Dendritic cell treated with granulocyte-macrophage colony-stimulating factor and Interleukin-4, amounts not matched to agents 40 ng/mL and 50 ng/mL, for 4 days (primary cell): ENCODE measurements at regions of chr19 and their contacts with region 1.

Region 1: GRCh38 chr19:44500148-44500956 is at the start of gene ZNF180:
- H3K4me3 Mint-ChIP-seq: peak within 1 kb of the TSS; percentile 82
- H3K27ac Mint-ChIP-seq: peak within 1 kb of the TSS; percentile 90
- H3K4me1 Mint-ChIP-seq: peaks cover 35% of the 10 kb centered on the region
- H3K27me3 Mint-ChIP-seq: peaks cover 21% of the 10 kb centered on the region

Region 2: GRCh38 chr19:44401139-44402115 is 98.9 kb before region 1 on chr19 and contains the start of gene ZNF285:
- intact Hi-C with region 1: loop called (anchors 10 kb)
- H3K4me3 Mint-ChIP-seq: peak within 1 kb of the TSS; percentile 79
- H3K27ac Mint-ChIP-seq: peak within 1 kb of the TSS; percentile 72
- H3K4me1 Mint-ChIP-seq: peaks cover 9% of the 10 kb centered on the region
- H3K27me3 Mint-ChIP-seq: peaks cover 2% of the 10 kb centered on the region

Region 3: DNA sequence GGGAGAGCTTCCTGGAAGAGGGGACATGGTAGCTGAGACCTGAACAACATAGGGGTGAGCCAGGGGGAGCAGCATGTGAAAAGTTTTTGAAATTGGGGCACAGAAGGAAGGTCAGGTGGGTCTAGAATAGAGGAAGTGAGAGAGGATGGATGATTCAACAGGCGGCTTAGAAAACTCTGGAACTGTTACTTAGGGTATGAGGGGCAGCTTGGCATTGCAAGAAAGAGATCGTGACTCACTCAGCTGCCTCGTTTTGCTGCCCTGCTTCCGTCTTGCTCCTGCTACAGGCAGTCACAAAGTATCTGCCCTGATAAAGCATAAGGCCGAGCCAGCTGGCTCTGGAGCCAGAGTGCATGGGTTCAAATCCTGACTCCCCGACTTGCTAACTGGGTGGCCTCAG is 30.4 kb after region 1 on chr19:
- intact Hi-C with region 1: no loop called
- H3K4me3 Mint-ChIP-seq: no peak overlapping the region
- H3K27ac Mint-ChIP-seq: no peak overlapping the region
- H3K4me1 Mint-ChIP-seq: peaks cover 8% of the 10 kb centered on the region
- H3K27me3 Mint-ChIP-seq: peaks cover 15% of the 10 kb centered on the region